CD8-positive, alpha-beta T cell (primary cell): ENCODE measurements at regions of chr1 and their contacts with region 1.

Region 1: GRCh38 chr1:93629099-93630059 is 52.3 kb downstream of the BCAR3 start:
- DNase-seq: peak; percentile 8 to 78 (median 37)
- ATAC-seq: peak; percentile 93
- H3K4me3 ChIP-seq: no peak overlapping the region
- H3K4me3 Mint-ChIP-seq: no peak overlapping the region
- H3K27ac ChIP-seq: no peak overlapping the region
- H3K27ac Mint-ChIP-seq: no peak overlapping the region
- H3K4me1 ChIP-seq: no peaks in the 10 kb centered on the region
- H3K4me1 Mint-ChIP-seq: no peaks in the 10 kb centered on the region
- H3K27me3 ChIP-seq: no peaks in the 10 kb centered on the region
- H3K27me3 Mint-ChIP-seq: no peaks in the 10 kb centered on the region
- CTCF ChIP-seq: peak; percentile 90

Region 2: DNA sequence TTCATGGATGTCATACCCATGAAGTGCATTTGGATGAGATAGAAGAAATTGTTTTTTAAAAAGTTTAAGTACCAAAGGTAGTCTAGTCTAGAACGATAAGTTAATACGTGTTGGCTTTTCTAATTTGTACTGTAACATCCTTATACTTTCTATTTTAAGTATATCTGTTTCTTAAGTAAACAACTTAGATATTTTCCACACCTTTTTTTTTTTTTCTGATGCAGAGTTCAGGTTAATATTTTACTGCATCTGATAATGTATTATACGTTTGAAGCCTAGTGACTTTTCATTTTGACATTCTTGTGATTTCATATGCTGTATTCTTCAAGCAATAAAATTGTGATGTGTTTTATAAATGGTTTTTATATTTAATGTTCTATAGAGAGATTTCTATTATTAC is 267.1 kb before region 1 on chr1:
- CTCF ChIA-PET with region 1: no interaction called
- POLR2A ChIA-PET with region 1: no interaction called
- intact Hi-C with region 1: no loop called
- DNase-seq: no peak
- ATAC-seq: no peak
- H3K4me3 ChIP-seq: no peak overlapping the region
- H3K4me3 Mint-ChIP-seq: no peak overlapping the region
- H3K27ac ChIP-seq: no peak overlapping the region
- H3K27ac Mint-ChIP-seq: no peak overlapping the region
- H3K4me1 ChIP-seq: peaks cover 22% of the 10 kb centered on the region
- H3K4me1 Mint-ChIP-seq: peaks cover 48% of the 10 kb centered on the region
- H3K27me3 ChIP-seq: no peaks in the 10 kb centered on the region
- H3K27me3 Mint-ChIP-seq: no peaks in the 10 kb centered on the region
- CTCF ChIP-seq: no peak

Region 3: DNA sequence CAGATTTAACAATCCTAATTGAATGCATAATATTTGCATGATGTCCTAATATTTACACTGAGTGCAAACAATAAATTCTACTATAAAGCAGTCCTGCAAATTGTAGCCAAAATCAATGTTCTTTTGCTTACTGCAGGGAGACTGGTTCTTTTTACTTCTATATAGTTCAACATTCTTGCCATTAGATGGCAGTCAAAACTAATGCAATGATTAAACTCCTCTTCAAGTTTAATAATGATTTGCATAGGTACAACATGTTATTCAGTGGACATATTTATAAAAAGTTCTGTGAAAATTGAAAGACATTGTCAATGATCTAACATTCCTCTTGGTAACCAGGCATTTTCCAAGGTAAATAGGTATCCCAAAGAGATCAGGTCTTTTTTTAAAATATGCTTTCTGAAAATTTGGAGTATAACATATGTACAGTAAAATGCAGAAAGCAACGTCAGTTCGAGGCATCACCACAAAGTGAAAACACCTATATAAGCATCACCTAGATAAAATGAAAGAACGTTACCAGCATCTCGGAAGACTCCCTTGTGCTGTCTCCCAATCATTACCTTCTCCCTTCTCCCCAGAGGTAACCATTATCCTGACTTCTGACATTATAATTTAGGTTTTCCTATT is 191.3 kb before region 1 on chr1:
- CTCF ChIA-PET with region 1: no interaction called
- POLR2A ChIA-PET with region 1: no interaction called
- intact Hi-C with region 1: loop called (anchors 2 to 10 kb)
- DNase-seq: peak in 2 of 9 experiments; percentile 45 to 59
- ATAC-seq: peak; percentile 52
- H3K4me3 ChIP-seq: no peak overlapping the region
- H3K4me3 Mint-ChIP-seq: no peak overlapping the region
- H3K27ac ChIP-seq: no peak overlapping the region
- H3K27ac Mint-ChIP-seq: no peak overlapping the region
- H3K4me1 ChIP-seq: no peaks in the 10 kb centered on the region
- H3K4me1 Mint-ChIP-seq: no peaks in the 10 kb centered on the region
- H3K27me3 ChIP-seq: no peaks in the 10 kb centered on the region
- H3K27me3 Mint-ChIP-seq: peaks cover 11% of the 10 kb centered on the region
- CTCF ChIP-seq: peak; percentile 52

Region 4: GRCh38 chr1:93579891-93580290 is 49.5 kb before region 1 on chr1:
- CTCF ChIA-PET with region 1: no interaction called
- POLR2A ChIA-PET with region 1: no interaction called
- intact Hi-C with region 1: no loop called
- DNase-seq: no peak
- ATAC-seq: no peak
- H3K4me3 ChIP-seq: no peak overlapping the region
- H3K4me3 Mint-ChIP-seq: no peak overlapping the region
- H3K27ac ChIP-seq: no peak overlapping the region
- H3K27ac Mint-ChIP-seq: no peak overlapping the region
- H3K4me1 ChIP-seq: no peaks in the 10 kb centered on the region
- H3K4me1 Mint-ChIP-seq: no peaks in the 10 kb centered on the region
- H3K27me3 ChIP-seq: no peaks in the 10 kb centered on the region
- H3K27me3 Mint-ChIP-seq: no peaks in the 10 kb centered on the region
- CTCF ChIP-seq: no peak

Region 5: GRCh38 chr1:93614986-93615581 is 14.3 kb before region 1 on chr1:
- CTCF ChIA-PET with region 1: interaction called, 21 read pairs
- POLR2A ChIA-PET with region 1: no interaction called
- intact Hi-C with region 1: no loop called
- DNase-seq: peak in 2 of 9 experiments; percentile 31 to 43
- ATAC-seq: peak; percentile 33
- H3K4me3 ChIP-seq: no peak overlapping the region
- H3K4me3 Mint-ChIP-seq: peak overlapping the region; percentile 44
- H3K27ac ChIP-seq: no peak overlapping the region
- H3K27ac Mint-ChIP-seq: peak overlapping the region; percentile 64
- H3K4me1 ChIP-seq: peaks cover 3% of the 10 kb centered on the region
- H3K4me1 Mint-ChIP-seq: peaks cover 13% of the 10 kb centered on the region
- H3K27me3 ChIP-seq: no peaks in the 10 kb centered on the region
- H3K27me3 Mint-ChIP-seq: no peaks in the 10 kb centered on the region
- CTCF ChIP-seq: no peak

Region 6: GRCh38 chr1:93814059-93814794 is 184.8 kb after region 1 on chr1:
- CTCF ChIA-PET with region 1: interaction called, 45 read pairs
- POLR2A ChIA-PET with region 1: no interaction called
- intact Hi-C with region 1: loop called in 1 of 2 experiments (anchors 1 kb)
- DNase-seq: peak in 6 of 9 experiments; percentile 9 to 68 (median 50)
- ATAC-seq: peak; percentile 29
- H3K4me3 ChIP-seq: no peak overlapping the region
- H3K4me3 Mint-ChIP-seq: no peak overlapping the region
- H3K27ac ChIP-seq: no peak overlapping the region
- H3K27ac Mint-ChIP-seq: no peak overlapping the region
- H3K4me1 ChIP-seq: peaks cover 9% of the 10 kb centered on the region
- H3K4me1 Mint-ChIP-seq: peaks cover 19% of the 10 kb centered on the region
- H3K27me3 ChIP-seq: no peaks in the 10 kb centered on the region
- H3K27me3 Mint-ChIP-seq: no peaks in the 10 kb centered on the region
- CTCF ChIP-seq: peak; percentile 50

Region 7: DNA sequence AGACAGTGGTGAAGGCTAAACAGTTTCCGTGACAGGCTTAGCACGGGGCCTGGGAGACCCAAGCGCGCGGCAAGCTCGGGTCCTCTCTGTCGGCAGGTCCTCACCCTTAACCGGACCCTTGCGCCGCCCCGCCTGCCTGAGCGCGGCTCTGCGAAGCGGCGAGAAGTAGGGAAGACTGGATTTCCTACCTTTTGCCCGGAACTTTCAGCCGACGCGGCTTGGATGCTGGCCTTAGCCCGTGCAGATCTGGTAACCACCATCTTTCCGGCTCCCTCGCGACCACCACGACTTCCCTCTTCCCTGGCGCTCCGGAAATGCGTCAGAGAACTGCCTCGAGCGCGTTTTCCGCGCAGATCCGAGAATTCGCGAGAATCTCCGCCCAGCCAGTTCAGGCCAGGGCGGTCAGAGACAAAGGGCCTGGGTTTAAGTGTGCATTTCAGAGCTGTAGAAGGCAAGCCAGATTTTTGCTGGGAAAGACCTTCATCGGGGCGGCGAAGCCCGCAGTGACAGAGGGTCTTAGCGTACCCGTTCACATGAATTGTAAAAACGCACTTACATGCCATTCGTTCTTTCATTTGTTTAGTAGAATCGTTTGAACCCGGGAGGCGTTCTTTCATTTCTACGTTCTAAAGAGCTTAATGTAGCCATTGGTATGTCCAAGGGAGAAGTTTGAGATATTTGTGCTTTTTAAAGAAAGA is 249.7 kb after region 1 on chr1 and contains the start of gene DNTTIP2:
- CTCF ChIA-PET with region 1: interaction called, 6 read pairs
- POLR2A ChIA-PET with region 1: no interaction called
- intact Hi-C with region 1: loop called in 1 of 2 experiments (anchors 1 kb)
- DNase-seq: peak; percentile 74 to 95 (median 88)
- ATAC-seq: peak; percentile 81
- H3K4me3 ChIP-seq: peak within 1 kb of the TSS; percentile 87 to 99
- H3K4me3 Mint-ChIP-seq: peak within 1 kb of the TSS; percentile 95
- H3K27ac ChIP-seq: peak within 1 kb of the TSS; percentile 95 to 99
- H3K27ac Mint-ChIP-seq: peak within 1 kb of the TSS; percentile 98
- H3K4me1 ChIP-seq: peaks cover 32% of the 10 kb centered on the region
- H3K4me1 Mint-ChIP-seq: peaks cover 46% of the 10 kb centered on the region
- H3K27me3 ChIP-seq: no peaks in the 10 kb centered on the region
- H3K27me3 Mint-ChIP-seq: no peaks in the 10 kb centered on the region
- CTCF ChIP-seq: no peak
- total RNA-seq, gene DNTTIP2: 126 to 130 TPM

Region 8: GRCh38 chr1:93909146-93910050 is 280.0 kb after region 1 on chr1 and contains the start of gene GCLM:
- CTCF ChIA-PET with region 1: interaction called, 6 read pairs
- POLR2A ChIA-PET with region 1: no interaction called
- intact Hi-C with region 1: loop called (anchors 1 kb)
- DNase-seq: peak; percentile 76 to 95 (median 91)
- ATAC-seq: peak; percentile 89
- H3K4me3 ChIP-seq: peak within 1 kb of the TSS; percentile 62 to 67
- H3K4me3 Mint-ChIP-seq: peak within 1 kb of the TSS; percentile 88
- H3K27ac ChIP-seq: peak within 1 kb of the TSS; percentile 72 to 76
- H3K27ac Mint-ChIP-seq: peak within 1 kb of the TSS; percentile 92
- H3K4me1 ChIP-seq: peaks cover 12% of the 10 kb centered on the region
- H3K4me1 Mint-ChIP-seq: peaks cover 37% of the 10 kb centered on the region
- H3K27me3 ChIP-seq: no peaks in the 10 kb centered on the region
- H3K27me3 Mint-ChIP-seq: no peaks in the 10 kb centered on the region
- CTCF ChIP-seq: peak; percentile 86
- total RNA-seq, gene GCLM: 6.4 to 6.8 TPM

Region 9: DNA sequence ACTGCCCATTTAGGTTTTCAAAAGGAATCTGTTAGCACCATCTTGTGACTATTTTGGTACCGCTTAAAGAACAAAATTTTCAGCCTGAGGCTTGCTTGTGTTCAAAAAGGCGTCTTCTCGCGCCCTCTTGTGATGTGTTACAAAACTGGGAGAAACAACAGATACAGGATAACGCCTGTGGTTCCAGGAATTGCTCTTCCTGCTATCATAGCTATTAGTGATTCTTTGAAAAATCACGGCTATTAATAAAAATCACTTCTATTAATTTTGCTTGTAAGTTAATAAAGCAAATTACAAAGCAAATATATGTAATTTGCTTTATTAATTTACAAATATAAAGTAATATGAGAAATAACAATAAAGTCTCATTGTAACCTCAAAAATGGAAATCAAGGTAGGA is 706.6 kb after region 1 on chr1:
- CTCF ChIA-PET with region 1: no interaction called
- POLR2A ChIA-PET with region 1: no interaction called
- intact Hi-C with region 1: loop called in 1 of 2 experiments (anchors 5 kb)
- DNase-seq: peak in 3 of 9 experiments; percentile 6 to 52 (median 26)
- ATAC-seq: no peak
- H3K4me3 ChIP-seq: no peak overlapping the region
- H3K4me3 Mint-ChIP-seq: no peak overlapping the region
- H3K27ac ChIP-seq: no peak overlapping the region
- H3K27ac Mint-ChIP-seq: no peak overlapping the region
- H3K4me1 ChIP-seq: no peaks in the 10 kb centered on the region
- H3K4me1 Mint-ChIP-seq: no peaks in the 10 kb centered on the region
- H3K27me3 ChIP-seq: no peaks in the 10 kb centered on the region
- H3K27me3 Mint-ChIP-seq: peaks cover 3% of the 10 kb centered on the region
- CTCF ChIP-seq: peak; percentile 43